Posterior vena cava (tissue), 2 donors: ENCODE measurements at regions of chrX and their contacts with region 1.

Region 1: DNA sequence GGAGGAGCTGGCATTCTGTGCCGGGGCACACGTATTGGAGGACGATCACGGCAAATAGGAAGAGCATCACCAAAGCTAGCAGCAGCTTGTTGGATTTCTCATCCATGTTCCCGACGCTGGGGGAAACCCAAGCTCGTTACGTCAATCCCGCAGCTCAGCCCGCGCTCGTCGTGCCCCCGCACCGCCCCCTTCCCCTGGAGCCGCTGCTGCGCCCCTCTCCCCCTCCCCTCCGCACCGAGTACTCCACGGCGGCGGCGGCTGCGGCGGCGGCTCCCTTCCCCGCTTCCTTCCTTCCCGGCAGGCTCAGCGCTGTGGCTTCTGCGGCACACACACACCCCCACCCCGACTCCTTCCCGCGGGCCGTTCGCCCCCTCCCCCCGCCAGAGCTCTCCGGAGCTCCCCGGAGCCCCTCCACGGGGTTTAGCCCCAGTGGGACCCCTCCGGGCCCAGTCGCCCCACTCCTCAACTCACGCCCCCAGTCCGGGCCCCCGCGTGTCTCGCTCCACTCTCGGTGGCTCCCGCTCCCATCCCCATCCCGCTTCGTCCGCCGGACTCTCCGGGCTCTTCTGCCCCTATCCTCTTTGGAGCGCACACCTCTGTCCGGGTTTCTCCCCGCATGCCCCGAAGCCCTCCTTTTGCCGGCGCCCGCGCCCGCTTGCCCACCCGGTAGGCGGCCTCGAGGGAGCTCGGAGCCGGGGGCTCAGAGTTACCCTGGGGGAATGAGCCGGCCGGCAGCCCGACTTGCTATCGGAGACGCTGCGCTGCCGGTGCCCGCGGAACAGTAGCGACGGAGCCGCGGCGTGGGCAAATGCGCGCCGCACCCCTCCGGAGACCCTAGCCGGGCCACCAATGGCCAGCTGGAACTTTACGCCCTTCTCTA is 978 bp downstream of the HS6ST2 start:
- DNase-seq: no peak

Region 2: DNA sequence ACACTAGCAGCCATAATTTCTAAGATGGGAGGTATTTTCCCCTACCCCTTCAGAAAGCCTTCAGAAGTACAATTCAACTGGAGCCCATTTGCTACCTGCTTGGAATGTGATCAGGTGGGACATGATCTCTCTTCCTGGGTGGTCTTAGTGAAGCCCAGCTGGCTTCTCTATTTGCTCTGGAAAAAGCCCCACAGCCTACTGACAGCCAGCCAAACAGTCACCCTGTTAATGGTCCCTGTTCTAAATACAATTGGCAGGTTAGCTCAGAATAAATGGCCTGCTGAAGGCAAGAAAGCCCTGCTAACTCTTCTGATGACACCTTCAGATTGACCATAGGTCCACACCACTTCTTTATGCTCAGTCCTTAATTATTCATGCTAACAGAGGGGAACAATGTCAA is 38.9 kb before region 1 on chrX:
- intact Hi-C with region 1: no loop called
- DNase-seq: no peak

Region 3: DNA sequence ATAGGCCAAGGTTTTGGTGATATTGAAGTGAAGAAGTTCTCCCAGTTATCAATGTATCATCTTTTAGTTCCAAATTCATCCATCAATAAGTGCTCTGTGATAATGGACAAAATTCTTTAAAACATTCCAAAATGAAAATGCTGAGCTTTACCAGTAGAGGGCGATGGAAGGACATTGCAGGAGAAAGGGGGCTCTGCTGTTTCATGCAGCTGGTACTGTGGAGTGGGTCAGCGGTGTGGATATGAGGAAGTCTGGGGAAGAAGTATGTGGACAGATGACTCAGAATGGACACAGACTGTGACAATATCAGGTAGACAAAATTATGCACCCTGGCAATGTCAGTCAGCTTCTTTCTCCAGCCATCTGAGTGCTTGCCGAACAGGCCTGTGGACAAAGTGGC is 47.6 kb after region 1 on chrX:
- intact Hi-C with region 1: loop called in 1 of 2 experiments (anchors 1 kb)
- DNase-seq: no peak